ENCODE measurements at regions of chr6 and their contacts with region 1.

Region 1: GRCh38 chr6:30828027-30828960 is 56.0 kb upstream of the DDR1 start:
- DNase-seq: peak; percentile 88
- ATAC-seq: peak; percentile 96
- H3K4me3 ChIP-seq: no peak overlapping the region
- H3K27ac ChIP-seq: peak overlapping the region; percentile 69
- H3K4me1 ChIP-seq: peaks cover 10% of the 10 kb centered on the region
- H3K27me3 ChIP-seq: no peaks in the 10 kb centered on the region
- CTCF ChIP-seq: peak; percentile 96

Region 2: DNA sequence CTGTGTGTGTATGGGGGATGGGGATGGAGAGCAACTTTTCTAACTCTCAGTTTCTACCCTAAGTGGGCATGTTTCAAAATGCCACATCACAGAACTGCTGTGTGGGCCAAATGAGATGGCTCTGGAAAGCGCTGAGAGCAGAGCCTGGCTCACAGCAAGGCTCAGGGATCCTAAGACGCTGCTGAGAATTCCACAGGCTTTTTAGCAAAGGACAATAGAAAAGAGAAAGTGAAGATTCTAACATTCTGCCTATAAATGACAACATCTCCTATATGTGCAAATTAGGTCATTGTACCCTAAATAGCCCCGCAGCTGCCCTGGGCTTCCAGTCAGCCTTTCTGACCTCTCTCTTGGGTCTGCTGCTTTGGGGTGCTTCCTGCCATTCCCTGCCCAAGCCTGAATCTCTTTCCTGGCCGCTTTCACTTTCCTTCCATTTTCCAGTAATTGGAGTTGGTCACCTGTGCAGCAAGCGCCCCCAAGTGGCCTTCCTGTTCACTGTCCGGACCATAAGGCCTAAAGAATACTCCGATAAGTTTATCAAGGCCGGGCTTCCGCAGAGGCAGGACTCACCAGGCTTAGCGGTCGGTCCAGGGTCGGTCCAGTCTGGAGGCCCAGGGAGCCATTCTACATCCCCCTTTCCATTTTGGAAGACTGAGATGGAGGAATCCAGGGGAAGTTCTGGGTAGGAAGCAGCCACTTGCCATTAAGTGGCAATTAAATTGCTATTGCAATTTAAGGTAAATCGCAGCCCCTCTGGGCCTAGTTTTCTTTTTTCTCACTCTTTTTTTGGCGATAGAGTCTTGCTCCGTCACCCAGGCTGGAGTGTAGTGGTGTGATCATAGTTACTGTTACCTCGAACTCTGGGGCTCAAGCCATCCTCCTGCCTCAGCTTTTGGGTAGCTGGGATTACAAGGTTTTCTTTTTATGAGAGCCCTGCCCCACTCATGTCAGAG is 49.4 kb after region 1 on chr6:
- intact Hi-C with region 1: loop called (anchors 2 kb)
- DNase-seq: peak; percentile 91
- ATAC-seq: peak; percentile 93
- H3K4me3 ChIP-seq: peak overlapping the region; percentile 37
- H3K27ac ChIP-seq: peak overlapping the region; percentile 82
- H3K4me1 ChIP-seq: peaks cover 12% of the 10 kb centered on the region
- H3K27me3 ChIP-seq: no peaks in the 10 kb centered on the region
- CTCF ChIP-seq: peak; percentile 88

Region 3: GRCh38 chr6:30981942-30982772 is 153.9 kb after region 1 on chr6:
- intact Hi-C with region 1: no loop called
- DNase-seq: no peak
- ATAC-seq: peak; percentile 80
- H3K4me3 ChIP-seq: peak overlapping the region; percentile 22
- H3K27ac ChIP-seq: no peak overlapping the region
- H3K4me1 ChIP-seq: peaks cover 5% of the 10 kb centered on the region
- H3K27me3 ChIP-seq: no peaks in the 10 kb centered on the region
- CTCF ChIP-seq: peak; percentile 25

Region 4: DNA sequence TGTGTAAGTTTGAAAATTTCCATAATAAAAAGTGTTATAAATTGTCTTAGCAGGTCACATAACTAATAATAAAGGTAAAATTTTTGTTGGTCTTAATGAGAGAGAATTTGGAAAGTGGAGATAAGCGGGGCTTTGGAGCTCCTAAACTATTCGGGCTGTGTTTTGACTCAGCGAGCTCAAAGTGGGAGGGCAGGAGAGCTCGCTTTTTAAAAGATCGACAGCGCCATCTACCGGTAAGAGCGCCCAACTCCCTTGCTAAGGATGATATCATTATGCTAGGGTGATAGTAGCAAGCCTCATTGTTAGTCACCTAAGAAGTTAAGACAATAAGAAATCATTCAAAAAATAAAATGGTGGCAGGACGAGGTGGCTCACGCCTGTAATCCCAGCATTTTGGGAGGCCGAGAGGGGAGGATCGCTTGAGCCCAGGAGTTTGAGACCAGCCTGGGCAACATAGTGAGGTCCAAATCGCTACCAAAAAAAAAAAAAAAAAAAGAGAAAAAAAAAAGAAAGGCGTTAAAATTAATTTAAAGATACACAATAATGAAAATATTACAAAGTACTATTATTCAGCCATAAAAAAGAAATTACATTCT is 259.3 kb after region 1 on chr6:
- intact Hi-C with region 1: loop called (anchors 5 kb)
- DNase-seq: peak; percentile 86
- ATAC-seq: peak; percentile 97
- H3K4me3 ChIP-seq: no peak overlapping the region
- H3K27ac ChIP-seq: no peak overlapping the region
- H3K4me1 ChIP-seq: peaks cover 10% of the 10 kb centered on the region
- H3K27me3 ChIP-seq: peaks cover 9% of the 10 kb centered on the region
- CTCF ChIP-seq: peak; percentile 89

Measured in upper lobe of right lung (tissue), 1 donor.